ENCODE measurements at regions of chr10 and their contacts with region 1.

Region 1: DNA sequence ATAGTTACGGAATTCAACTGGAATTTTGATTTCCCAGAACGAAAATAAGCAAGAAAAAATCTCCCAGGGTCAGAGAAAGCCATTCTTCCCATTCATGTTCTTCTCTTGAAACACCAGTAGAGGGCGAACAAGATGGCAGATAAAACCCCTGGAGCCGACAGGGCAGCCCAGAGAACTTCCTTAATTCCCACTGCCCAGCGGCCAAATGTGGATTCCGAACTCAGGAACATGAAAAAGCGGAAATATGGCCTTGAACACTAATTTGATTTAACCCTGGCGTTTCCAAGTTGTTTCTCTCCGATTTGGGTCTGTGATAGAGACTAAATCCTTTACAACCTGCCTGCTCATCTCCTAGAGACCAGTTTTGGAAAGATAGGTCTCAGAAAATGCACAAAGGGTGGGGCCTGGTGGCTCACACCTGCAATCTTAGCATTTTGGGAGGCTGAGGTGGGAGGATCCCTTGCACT is 100.7 kb upstream of the WAC start:
- DNase-seq: peak; percentile 79

Region 2: GRCh38 chr10:28072573-28072972 is 359.7 kb before region 1 on chr10:
- in situ Hi-C with region 1: no loop called
- DNase-seq: no peak

Region 3: GRCh38 chr10:28587970-28588290 is 155.7 kb after region 1 on chr10:
- in situ Hi-C with region 1: loop called (anchors 25 kb)
- DNase-seq: peak; percentile 44

Measured in SK-MEL-5 (cell line).